ENCODE measurements at regions of chr10 and their contacts with region 1.

Region 1: GRCh38 chr10:12369982-12370381 is 20.6 kb downstream of the CAMK1D start:
- DNase-seq: no peak
- ATAC-seq: no peak
- H3K4me3 Mint-ChIP-seq: no peak overlapping the region
- H3K27ac Mint-ChIP-seq: no peak overlapping the region
- H3K4me1 Mint-ChIP-seq: peaks cover 27% of the 10 kb centered on the region
- H3K27me3 Mint-ChIP-seq: no peaks in the 10 kb centered on the region

Region 2: GRCh38 chr10:12412666-12413368 is 42.8 kb after region 1 on chr10:
- CTCF ChIA-PET with region 1: no interaction called
- POLR2A ChIA-PET with region 1: no interaction called
- intact Hi-C with region 1: loop called in 1 of 2 experiments (anchors 5 kb)
- DNase-seq: peak; percentile 67
- ATAC-seq: peak; percentile 87
- H3K4me3 Mint-ChIP-seq: peak overlapping the region; percentile 38
- H3K27ac Mint-ChIP-seq: peak overlapping the region; percentile 35
- H3K4me1 Mint-ChIP-seq: peaks cover 32% of the 10 kb centered on the region
- H3K27me3 Mint-ChIP-seq: no peaks in the 10 kb centered on the region